HCT116 (cell line): ENCODE measurements at regions of chr7 and their contacts with region 1.

Region 1: DNA sequence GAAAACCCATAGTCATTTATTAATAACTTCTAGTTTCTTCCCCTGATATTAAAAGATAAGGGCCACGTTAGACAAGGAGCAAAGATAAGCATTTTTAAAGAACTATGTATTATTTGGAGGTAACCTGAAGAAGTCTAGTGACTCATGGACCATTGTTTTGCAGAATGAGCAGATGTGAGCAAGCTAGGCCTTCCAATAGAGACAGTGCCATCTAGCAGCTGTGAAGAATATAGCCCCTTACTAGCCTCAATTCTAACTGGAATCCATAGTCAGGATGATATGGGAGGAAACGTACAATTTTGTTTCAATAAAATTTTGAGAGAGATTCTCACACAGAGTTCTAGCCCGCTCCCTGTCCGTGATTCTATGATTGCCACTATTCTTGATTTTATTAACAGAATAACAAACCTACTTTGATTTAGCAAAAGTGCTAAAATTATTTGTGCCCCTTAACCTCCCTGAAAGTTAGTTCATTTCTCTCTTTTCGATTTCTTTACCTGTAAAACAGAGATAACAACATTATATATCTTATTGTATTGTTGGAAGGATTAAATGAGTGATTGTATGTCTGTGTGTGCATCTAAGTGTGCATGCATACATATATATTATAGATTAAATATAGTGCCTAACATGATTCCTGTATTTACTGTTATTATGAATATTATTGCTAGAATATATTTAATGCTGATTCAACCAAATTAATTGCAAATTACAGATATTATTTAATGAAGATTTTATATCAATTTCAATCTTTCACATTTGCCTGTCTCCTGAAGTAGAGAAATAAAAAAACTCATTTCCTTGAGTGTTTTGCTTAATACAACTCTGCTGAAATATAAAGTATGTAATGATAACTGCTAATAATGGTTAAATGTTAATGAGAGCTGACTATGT is 22.7 kb downstream of the FAM237B start:
- DNase-seq: peak; percentile 29
- ATAC-seq: peak; percentile 99
- H3K4me3 ChIP-seq: no peak overlapping the region
- H3K27ac ChIP-seq: no peak overlapping the region
- H3K4me1 ChIP-seq: no peaks in the 10 kb centered on the region
- H3K27me3 ChIP-seq: no peaks in the 10 kb centered on the region
- CTCF ChIP-seq: peak; percentile 49 to 68 (median 67); a peak in 5 of 6 replicates
- POLR2A ChIP-seq: no peak
- RAD21 ChIP-seq: peak; percentile 55; the same call in 1 of the 2 replicates

Region 2: DNA sequence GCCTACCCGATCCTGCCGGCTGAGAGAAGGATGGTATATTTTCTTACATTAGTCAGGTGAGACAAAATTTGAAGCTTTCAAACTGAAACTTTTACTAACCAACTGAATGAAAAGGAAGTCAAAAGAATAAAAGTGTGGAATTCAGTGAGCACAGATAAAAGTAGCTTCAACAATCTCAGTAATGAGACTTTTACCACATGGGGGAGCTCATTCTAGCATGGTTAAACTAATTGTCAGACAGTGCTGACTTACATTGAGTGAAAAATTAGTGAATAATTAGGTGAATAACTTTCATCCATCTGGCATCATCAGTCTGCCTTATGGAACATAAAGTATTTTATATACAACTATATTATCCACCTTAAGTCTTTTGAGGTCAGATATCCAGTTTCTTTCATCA is 14.4 kb after region 1 on chr7:
- CTCF ChIA-PET with region 1: interaction called, 12 read pairs
- POLR2A ChIA-PET with region 1: no interaction called
- RAD21 ChIA-PET with region 1: no interaction called
- intact Hi-C with region 1: no loop called
- DNase-seq: no peak
- ATAC-seq: peak; percentile 58; the same call in 1 of the 2 replicates
- H3K4me3 ChIP-seq: no peak overlapping the region
- H3K27ac ChIP-seq: no peak overlapping the region
- H3K4me1 ChIP-seq: no peaks in the 10 kb centered on the region
- H3K27me3 ChIP-seq: no peaks in the 10 kb centered on the region
- CTCF ChIP-seq: peak; percentile 28 to 42 (median 35); a peak in 3 of 6 replicates
- POLR2A ChIP-seq: no peak
- RAD21 ChIP-seq: peak; percentile 29; the same call in 1 of the 2 replicates